HEK293 (cell line): ENCODE measurements at regions of chrX and their contacts with region 1.

Region 1: DNA sequence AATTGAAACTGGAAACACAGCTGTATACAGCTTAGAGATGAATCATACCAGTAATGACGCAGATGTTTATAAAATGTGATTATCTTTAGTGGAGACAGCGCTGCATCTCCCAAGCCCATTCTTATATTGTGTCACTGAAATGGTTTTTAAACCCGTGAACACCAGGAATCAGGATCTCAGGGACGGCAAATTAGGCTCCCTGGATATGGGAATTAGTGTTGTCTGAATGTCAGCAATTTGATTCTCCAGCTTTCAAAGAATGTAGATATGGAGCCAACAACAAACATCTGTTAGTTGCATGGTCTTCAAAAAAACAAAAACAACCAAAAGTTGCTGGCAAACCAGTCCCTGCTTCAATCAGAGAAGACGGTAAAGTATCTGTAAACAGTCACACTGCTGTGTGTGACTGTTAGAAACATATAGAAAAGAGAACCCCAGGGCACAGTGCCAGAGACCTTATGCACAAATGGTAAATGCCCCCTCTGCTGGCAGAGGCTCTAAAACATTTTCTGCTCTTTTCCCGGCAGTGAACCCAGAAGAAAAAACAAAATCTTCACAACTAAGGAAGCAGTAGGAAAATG is 351.9 kb upstream of the FTHL17 start:
- H3K4me3 ChIP-seq: no peak overlapping the region
- H3K27ac ChIP-seq: no peak overlapping the region
- H3K4me1 ChIP-seq: no peaks in the 10 kb centered on the region; the same call in 1 of the 2 replicates
- CTCF ChIP-seq: 0 out of 2 replicates have a peak, but pooled peaks have one; percentile 20

Region 2: GRCh38 chrX:31213941-31214340 is 209.8 kb before region 1 on chrX:
- CTCF ChIA-PET with region 1: interaction called, 14 read pairs
- POLR2A ChIA-PET with region 1: no interaction called
- H3K4me3 ChIP-seq: no peak overlapping the region
- H3K27ac ChIP-seq: no peak overlapping the region
- H3K4me1 ChIP-seq: peaks cover 5% of the 10 kb centered on the region; the same call in 1 of the 2 replicates
- CTCF ChIP-seq: no peak

Region 3: GRCh38 chrX:31279359-31279758 is 144.3 kb before region 1 on chrX:
- CTCF ChIA-PET with region 1: interaction called, 20 read pairs
- POLR2A ChIA-PET with region 1: interaction called, 3 read pairs
- H3K4me3 ChIP-seq: no peak overlapping the region
- H3K27ac ChIP-seq: no peak overlapping the region
- H3K4me1 ChIP-seq: no peaks in the 10 kb centered on the region
- CTCF ChIP-seq: no peak

Region 4: GRCh38 chrX:31658360-31658759 is 234.7 kb after region 1 on chrX:
- CTCF ChIA-PET with region 1: interaction called, 11 read pairs
- POLR2A ChIA-PET with region 1: no interaction called
- H3K4me3 ChIP-seq: no peak overlapping the region
- H3K27ac ChIP-seq: no peak overlapping the region
- H3K4me1 ChIP-seq: peaks cover 5% of the 10 kb centered on the region
- CTCF ChIP-seq: no peak